ENCODE measurements at regions of chr11 and their contacts with region 1.

Region 1: GRCh38 chr11:34105079-34105956 is at the start of gene NAT10:
- DNase-seq: peak; percentile 99
- ATAC-seq: peak; percentile 91
- H3K4me3 ChIP-seq: peak within 1 kb of the TSS; percentile 70 to 99 (median 93)
- H3K4me3 Mint-ChIP-seq: peak within 1 kb of the TSS; percentile 97
- H3K27ac ChIP-seq: peak within 1 kb of the TSS; percentile 95 to 96
- H3K27ac Mint-ChIP-seq: peak within 1 kb of the TSS; percentile 100
- H3K4me1 ChIP-seq: peaks cover 24 to 28% of the 10 kb centered on the region in 2 donors
- H3K4me1 Mint-ChIP-seq: peaks cover 47% of the 10 kb centered on the region
- H3K27me3 ChIP-seq: no peaks in the 10 kb centered on the region
- H3K27me3 Mint-ChIP-seq: no peaks in the 10 kb centered on the region
- CTCF ChIP-seq: no peak
- total RNA-seq, gene NAT10: 73.5 and 74.5 TPM in 2 replicates

Region 2: GRCh38 chr11:33005175-33005574 is 1100.1 kb before region 1 on chr11:
- CTCF ChIA-PET with region 1: no interaction called
- POLR2A ChIA-PET with region 1: no interaction called
- intact Hi-C with region 1: no loop called
- DNase-seq: no peak
- ATAC-seq: no peak
- H3K4me3 ChIP-seq: no peak overlapping the region
- H3K4me3 Mint-ChIP-seq: no peak overlapping the region
- H3K27ac ChIP-seq: no peak overlapping the region
- H3K27ac Mint-ChIP-seq: no peak overlapping the region
- H3K4me1 ChIP-seq: no peaks in the 10 kb centered on the region
- H3K4me1 Mint-ChIP-seq: no peaks in the 10 kb centered on the region
- H3K27me3 ChIP-seq: peaks cover 0 to 13% (median 0%) of the 10 kb centered on the region in 4 experiments
- H3K27me3 Mint-ChIP-seq: peaks cover 10% of the 10 kb centered on the region
- CTCF ChIP-seq: no peak

Region 3: DNA sequence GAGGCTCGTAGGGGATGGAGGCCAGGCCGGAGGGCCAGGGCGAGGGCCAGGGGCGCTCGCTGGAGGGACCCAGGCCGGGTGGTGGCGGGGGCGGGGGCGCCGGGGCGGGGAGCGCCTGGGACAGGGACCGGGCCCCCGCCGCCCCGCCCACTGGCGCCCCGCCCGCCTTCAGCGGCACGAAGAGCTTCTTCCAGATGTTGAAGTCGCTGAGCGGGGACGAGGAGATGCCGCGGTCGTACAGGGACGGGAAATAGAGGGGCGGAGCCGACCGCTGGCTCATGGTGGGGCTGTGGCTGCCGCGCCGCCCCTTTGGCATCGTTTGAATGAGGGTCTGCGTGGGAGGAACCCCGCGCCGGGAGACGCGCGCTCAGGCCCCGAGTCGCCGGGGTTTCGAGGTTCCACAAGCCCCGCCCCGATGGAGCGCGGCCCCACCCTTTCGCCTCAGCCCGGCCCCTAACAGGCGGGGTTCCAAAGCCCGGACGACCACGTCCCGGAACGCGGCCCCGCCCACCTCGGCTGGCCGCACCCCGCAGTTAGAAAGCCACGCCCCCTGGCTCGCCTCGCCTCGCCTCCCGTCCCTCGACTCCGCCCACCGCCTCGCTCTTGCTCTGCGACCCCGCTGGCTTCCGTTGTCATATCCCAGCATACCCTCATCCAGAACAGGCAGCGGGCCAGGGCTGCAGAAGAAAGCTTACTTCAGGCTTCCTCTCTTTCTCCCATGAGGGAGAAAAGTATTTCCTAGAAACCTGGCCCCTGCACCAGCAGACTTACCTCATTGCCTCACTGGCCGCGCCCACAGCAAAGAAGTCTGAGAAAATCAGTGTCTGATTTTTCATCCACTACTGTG is 404.7 kb before region 1 on chr11 and contains the start of gene C11orf91:
- CTCF ChIA-PET with region 1: no interaction called
- POLR2A ChIA-PET with region 1: no interaction called
- intact Hi-C with region 1: loop called (anchors 2 kb)
- DNase-seq: peak; percentile 97
- ATAC-seq: peak; percentile 99
- H3K4me3 ChIP-seq: peak within 1 kb of the TSS; percentile 53 to 74 (median 60)
- H3K4me3 Mint-ChIP-seq: peak within 1 kb of the TSS; percentile 93
- H3K27ac ChIP-seq: no peak within 1 kb of the TSS
- H3K27ac Mint-ChIP-seq: peak within 1 kb of the TSS; percentile 57
- H3K4me1 ChIP-seq: peaks cover 6 to 16% of the 10 kb centered on the region in 2 donors
- H3K4me1 Mint-ChIP-seq: peaks cover 17% of the 10 kb centered on the region
- H3K27me3 ChIP-seq: peaks cover 0 to 14% (median 3%) of the 10 kb centered on the region in 4 experiments
- H3K27me3 Mint-ChIP-seq: peaks cover 5% of the 10 kb centered on the region
- CTCF ChIP-seq: no peak
- total RNA-seq, gene C11orf91: not detected in 2 replicates

Region 4: GRCh38 chr11:33773987-33774735 is 331.2 kb before region 1 on chr11 and contains the start of gene FBXO3:
- CTCF ChIA-PET with region 1: no interaction called
- POLR2A ChIA-PET with region 1: no interaction called
- intact Hi-C with region 1: loop called (anchors 2 kb)
- DNase-seq: peak; percentile 90
- ATAC-seq: peak; percentile 94
- H3K4me3 ChIP-seq: peak within 1 kb of the TSS; percentile 66 to 91 (median 86)
- H3K4me3 Mint-ChIP-seq: peak within 1 kb of the TSS; percentile 92
- H3K27ac ChIP-seq: peak within 1 kb of the TSS; percentile 57 to 82
- H3K27ac Mint-ChIP-seq: peak within 1 kb of the TSS; percentile 95
- H3K4me1 ChIP-seq: peaks cover 21 to 24% of the 10 kb centered on the region in 2 donors
- H3K4me1 Mint-ChIP-seq: peaks cover 40% of the 10 kb centered on the region
- H3K27me3 ChIP-seq: peaks cover 0 to 22% (median 9%) of the 10 kb centered on the region in 4 experiments
- H3K27me3 Mint-ChIP-seq: peaks cover 19% of the 10 kb centered on the region
- CTCF ChIP-seq: no peak
- total RNA-seq, gene FBXO3: 32.7 and 34.3 TPM in 2 replicates

Region 5: DNA sequence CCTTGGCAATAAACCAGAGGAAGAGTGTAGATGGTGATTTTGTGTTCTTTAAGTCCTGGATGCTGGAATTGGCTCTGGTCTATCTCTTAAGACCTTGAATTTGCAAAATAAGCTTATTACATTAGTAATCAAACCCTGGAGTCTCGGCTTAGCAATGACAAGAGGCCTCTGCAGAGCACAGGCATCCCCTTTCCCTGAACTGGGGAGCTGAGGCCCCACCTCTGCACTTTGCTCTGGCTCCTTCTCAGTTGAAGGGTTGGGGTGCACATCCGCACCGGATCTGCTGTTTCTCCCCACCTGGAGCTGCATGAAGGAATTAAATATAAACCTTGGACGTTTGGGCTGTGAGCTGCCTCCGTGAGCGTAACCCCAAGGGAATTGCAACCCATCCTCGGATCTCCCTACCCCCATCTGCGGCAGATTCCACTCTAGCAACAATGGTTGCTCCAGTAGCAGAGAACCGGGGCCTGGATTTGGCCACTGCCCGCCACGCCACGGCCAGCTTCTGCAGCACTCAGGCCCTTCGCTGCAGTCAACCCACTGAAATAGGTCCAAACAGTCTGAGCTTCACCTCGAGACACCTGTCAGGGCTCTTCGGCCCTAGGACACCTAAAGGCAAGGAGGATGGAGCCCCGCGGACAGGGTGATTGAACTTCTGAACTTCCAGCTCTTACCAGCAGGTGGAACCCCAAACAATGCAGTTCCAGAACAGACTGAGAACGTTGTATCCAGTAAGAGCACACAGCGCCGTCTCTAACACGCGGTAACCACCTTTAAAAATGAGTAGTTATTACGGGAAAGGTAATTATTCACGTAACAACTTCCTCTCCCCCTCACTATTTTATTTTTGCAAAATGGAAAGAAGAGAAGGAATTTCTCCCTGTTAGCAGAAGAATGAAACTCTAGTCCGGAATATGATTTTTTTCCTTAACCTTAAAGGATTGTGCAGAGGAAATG is 108.5 kb before region 1 on chr11:
- CTCF ChIA-PET with region 1: interaction called, 7 read pairs
- POLR2A ChIA-PET with region 1: no interaction called
- intact Hi-C with region 1: loop called (anchors 1 kb)
- DNase-seq: peak; percentile 85
- ATAC-seq: peak; percentile 98
- H3K4me3 ChIP-seq: no peak overlapping the region
- H3K4me3 Mint-ChIP-seq: peak overlapping the region; percentile 6
- H3K27ac ChIP-seq: no peak overlapping the region
- H3K27ac Mint-ChIP-seq: no peak overlapping the region
- H3K4me1 ChIP-seq: peaks cover 8 to 13% of the 10 kb centered on the region in 2 donors
- H3K4me1 Mint-ChIP-seq: peaks cover 13% of the 10 kb centered on the region
- H3K27me3 ChIP-seq: peaks cover 0 to 27% (median 13%) of the 10 kb centered on the region in 4 experiments
- H3K27me3 Mint-ChIP-seq: peaks cover 23% of the 10 kb centered on the region
- CTCF ChIP-seq: peak; percentile 85

Region 6: GRCh38 chr11:34250732-34251639 is 145.7 kb after region 1 on chr11:
- CTCF ChIA-PET with region 1: no interaction called
- POLR2A ChIA-PET with region 1: no interaction called
- intact Hi-C with region 1: loop called (anchors 1 kb)
- DNase-seq: peak; percentile 93
- ATAC-seq: peak; percentile 99
- H3K4me3 ChIP-seq: peak overlapping the region in 4 of 5 experiments; percentile 13 to 59 (median 46)
- H3K4me3 Mint-ChIP-seq: peak overlapping the region; percentile 47
- H3K27ac ChIP-seq: peak overlapping the region; percentile 67 to 76
- H3K27ac Mint-ChIP-seq: peak overlapping the region; percentile 72
- H3K4me1 ChIP-seq: peaks cover 19 to 26% of the 10 kb centered on the region in 2 donors
- H3K4me1 Mint-ChIP-seq: peaks cover 36% of the 10 kb centered on the region
- H3K27me3 ChIP-seq: no peaks in the 10 kb centered on the region
- H3K27me3 Mint-ChIP-seq: no peaks in the 10 kb centered on the region
- CTCF ChIP-seq: no peak

Region 7: GRCh38 chr11:34552270-34552669 is 447.0 kb after region 1 on chr11:
- CTCF ChIA-PET with region 1: no interaction called
- POLR2A ChIA-PET with region 1: no interaction called
- intact Hi-C with region 1: no loop called
- DNase-seq: no peak
- ATAC-seq: no peak
- H3K4me3 ChIP-seq: no peak overlapping the region
- H3K4me3 Mint-ChIP-seq: no peak overlapping the region
- H3K27ac ChIP-seq: no peak overlapping the region
- H3K27ac Mint-ChIP-seq: no peak overlapping the region
- H3K4me1 ChIP-seq: no peaks in the 10 kb centered on the region
- H3K4me1 Mint-ChIP-seq: no peaks in the 10 kb centered on the region
- H3K27me3 ChIP-seq: peaks cover 0 to 2% (median 0%) of the 10 kb centered on the region in 4 experiments
- H3K27me3 Mint-ChIP-seq: peaks cover 12% of the 10 kb centered on the region
- CTCF ChIP-seq: no peak